AG04449 (cell line): ENCODE measurements at regions of chr7 and their contacts with region 1.

Region 1: DNA sequence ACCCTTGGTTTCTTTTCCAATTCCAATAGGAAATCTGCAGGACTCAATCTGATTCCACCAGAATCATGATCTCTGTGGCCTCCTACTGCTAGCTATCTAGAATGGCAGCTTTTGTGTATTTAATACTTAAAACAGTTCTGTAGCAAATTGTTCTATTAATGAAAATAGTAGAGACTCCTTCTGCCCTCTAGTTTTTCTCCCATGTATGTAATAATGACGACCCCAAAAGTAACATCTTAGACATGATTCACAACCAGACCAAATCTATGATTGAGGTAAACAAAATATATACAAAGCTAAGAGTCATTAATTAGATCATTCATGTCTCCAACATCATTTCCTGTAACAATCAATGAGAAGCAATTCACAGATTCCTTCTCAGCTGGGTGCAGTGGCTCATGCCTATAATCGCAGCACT is 259.1 kb upstream of the MKLN1 start:
- DNase-seq: no peak
- H3K4me3 ChIP-seq: no peak overlapping the region
- CTCF ChIP-seq: peak; percentile 23

Region 2: GRCh38 chr7:131047651-131048304 is 20.8 kb before region 1 on chr7:
- CTCF ChIA-PET with region 1: interaction called, 13 read pairs
- POLR2A ChIA-PET with region 1: no interaction called
- DNase-seq: no peak
- H3K4me3 ChIP-seq: no peak overlapping the region
- CTCF ChIP-seq: no peak

Region 3: DNA sequence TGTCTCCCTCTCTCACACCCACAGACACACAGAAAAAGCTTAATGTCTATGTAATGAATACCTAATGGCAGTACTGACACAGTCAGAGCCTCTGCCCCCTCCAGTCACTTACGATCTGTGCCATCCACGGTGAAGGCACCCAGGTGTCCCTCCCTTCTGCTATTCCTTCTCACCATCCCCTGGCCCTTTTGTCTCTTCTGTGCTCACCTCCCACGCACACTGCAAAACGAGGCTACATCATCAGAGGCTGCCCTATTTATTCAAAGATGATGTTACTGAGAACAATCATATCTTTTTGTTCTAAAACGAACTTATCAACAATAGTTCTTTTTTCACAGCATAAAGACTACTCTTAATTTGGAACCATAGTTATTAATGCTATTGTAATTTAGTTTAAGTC is 12.1 kb after region 1 on chr7:
- CTCF ChIA-PET with region 1: interaction called, 11 read pairs
- POLR2A ChIA-PET with region 1: no interaction called
- DNase-seq: no peak
- H3K4me3 ChIP-seq: no peak overlapping the region
- CTCF ChIP-seq: no peak

Region 4: GRCh38 chr7:131302876-131303707 is 234.5 kb after region 1 on chr7:
- CTCF ChIA-PET with region 1: interaction called, 29 read pairs
- POLR2A ChIA-PET with region 1: no interaction called
- DNase-seq: no peak
- H3K4me3 ChIP-seq: no peak overlapping the region
- CTCF ChIP-seq: peak; percentile 53

Region 5: GRCh38 chr7:131424219-131424822 is 355.7 kb after region 1 on chr7:
- CTCF ChIA-PET with region 1: interaction called, 45 read pairs
- POLR2A ChIA-PET with region 1: no interaction called
- DNase-seq: no peak
- H3K4me3 ChIP-seq: no peak overlapping the region
- CTCF ChIP-seq: peak; percentile 38